ENCODE measurements at regions of chr16 and their contacts with region 1.

Region 1: DNA sequence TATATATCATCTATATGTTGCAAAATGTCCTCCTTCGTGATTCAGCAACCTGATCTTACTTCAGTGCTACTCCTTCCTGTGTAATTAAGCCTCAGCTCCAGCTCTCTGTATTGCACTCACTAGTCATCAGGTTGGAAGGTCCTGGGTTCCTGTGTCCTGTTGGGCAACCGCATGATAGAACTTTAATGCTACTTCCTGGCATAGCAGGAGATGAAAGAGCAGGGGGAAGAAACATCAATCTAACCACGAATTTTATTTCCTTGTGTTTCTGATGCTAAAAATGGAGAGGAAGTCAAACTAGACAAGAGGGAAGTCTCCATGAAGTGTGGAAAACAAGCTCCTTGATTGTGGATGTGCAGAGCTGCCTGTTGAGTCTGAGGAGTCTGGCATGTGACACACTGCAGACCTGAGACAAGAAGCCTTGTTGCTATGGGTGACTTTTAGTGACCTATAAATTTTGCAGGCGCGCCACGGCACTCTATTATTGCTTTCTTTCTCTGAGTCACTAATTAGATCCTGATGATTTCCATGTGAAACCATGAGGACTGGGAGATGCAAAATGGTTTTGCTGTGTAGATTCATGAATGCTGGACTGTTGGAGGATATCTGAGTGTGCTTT is 25.6 kb downstream of the IGSF6 start:
- DNase-seq: peak; percentile 63
- H3K4me3 Mint-ChIP-seq: peak overlapping the region; percentile 39
- H3K27ac Mint-ChIP-seq: peak overlapping the region; percentile 80
- H3K4me1 Mint-ChIP-seq: peaks cover 56% of the 10 kb centered on the region
- H3K27me3 Mint-ChIP-seq: no peaks in the 10 kb centered on the region
- CTCF ChIP-seq: no peak

Region 2: DNA sequence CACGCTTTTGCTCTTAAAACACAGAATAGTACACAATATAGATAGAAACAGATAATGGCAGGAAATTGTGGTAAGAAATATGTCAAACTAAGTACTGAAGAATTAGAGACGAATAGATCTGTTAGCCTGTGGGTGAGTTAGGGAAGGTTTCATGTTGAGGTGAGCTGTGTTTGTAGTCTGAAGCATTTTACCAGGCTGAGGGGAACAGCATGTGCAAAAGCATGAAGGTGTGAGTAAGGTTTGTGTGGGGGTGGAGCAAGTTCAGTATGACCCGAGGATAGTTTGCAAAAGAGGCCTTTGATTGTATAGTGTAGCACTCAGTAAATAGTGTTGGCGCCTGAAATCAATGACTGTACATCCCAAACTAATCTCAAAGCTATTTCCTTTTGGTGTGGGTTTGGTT is 11.8 kb after region 1 on chr16:
- CTCF ChIA-PET with region 1: interaction called, 3 read pairs
- intact Hi-C with region 1: loop called (anchors 1 kb)
- DNase-seq: peak; percentile 37
- H3K4me3 Mint-ChIP-seq: no peak overlapping the region
- H3K27ac Mint-ChIP-seq: peak overlapping the region; percentile 1
- H3K4me1 Mint-ChIP-seq: peaks cover 33% of the 10 kb centered on the region
- H3K27me3 Mint-ChIP-seq: no peaks in the 10 kb centered on the region
- CTCF ChIP-seq: no peak